ENCODE measurements at regions of chr11 and their contacts with region 1.

Region 1: GRCh38 chr11:114348200-114349191 is 51.8 kb downstream of the C11orf71 start:
- DNase-seq: peak; percentile 70
- H3K4me3 ChIP-seq: no peak overlapping the region
- H3K27ac ChIP-seq: no peak overlapping the region
- H3K4me1 ChIP-seq: no peaks in the 10 kb centered on the region
- H3K27me3 ChIP-seq: no peaks in the 10 kb centered on the region
- CTCF ChIP-seq: peak; percentile 24 to 64 (median 56)
- POLR2A ChIP-seq: no peak

Region 2: DNA sequence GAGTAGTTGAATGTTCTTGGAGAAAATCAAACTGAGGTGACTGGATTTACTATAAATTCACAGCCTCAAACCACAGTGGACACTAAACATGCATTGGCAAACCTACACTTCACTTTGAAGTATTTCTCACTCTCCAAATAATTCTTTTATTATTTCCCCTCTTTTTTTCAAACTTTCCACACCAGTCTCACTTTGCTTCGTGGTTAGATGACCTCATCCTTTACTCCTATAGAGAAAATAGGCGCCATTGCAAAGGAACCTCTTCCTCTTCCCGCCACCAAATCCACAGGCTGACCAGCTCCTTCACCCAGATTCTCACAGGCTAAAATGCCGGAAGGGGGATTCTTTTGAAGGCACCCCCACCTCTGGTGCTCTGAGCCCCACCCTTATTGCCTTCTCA is 340.2 kb before region 1 on chr11:
- intact Hi-C with region 1: no loop called
- DNase-seq: no peak
- H3K4me3 ChIP-seq: no peak overlapping the region
- H3K27ac ChIP-seq: no peak overlapping the region
- H3K4me1 ChIP-seq: no peaks in the 10 kb centered on the region
- H3K27me3 ChIP-seq: no peaks in the 10 kb centered on the region
- CTCF ChIP-seq: no peak
- POLR2A ChIP-seq: no peak

Region 3: GRCh38 chr11:114762408-114762807 is 413.9 kb after region 1 on chr11:
- intact Hi-C with region 1: loop called (anchors 2 kb)
- DNase-seq: peak; percentile 51
- H3K4me3 ChIP-seq: no peak overlapping the region
- H3K27ac ChIP-seq: no peak overlapping the region
- H3K4me1 ChIP-seq: no peaks in the 10 kb centered on the region
- H3K27me3 ChIP-seq: no peaks in the 10 kb centered on the region
- CTCF ChIP-seq: peak in 3 of 4 experiments; percentile 54 to 75 (median 67)
- POLR2A ChIP-seq: no peak

Measured in prostate gland (tissue), 2 donors.